MCF 10A (cell line): ENCODE measurements at regions of chr4 and their contacts with region 1.

Region 1: GRCh38 chr4:41214136-41214824 is at the start of gene APBB2:
- DNase-seq: peak; percentile 97
- H3K4me3 Mint-ChIP-seq: peak within 1 kb of the TSS; percentile 98
- H3K27ac Mint-ChIP-seq: peak within 1 kb of the TSS; percentile 97
- H3K4me1 Mint-ChIP-seq: peaks cover 12% of the 10 kb centered on the region
- H3K27me3 Mint-ChIP-seq: no peaks in the 10 kb centered on the region
- CTCF ChIP-seq: peak; percentile 86
- total RNA-seq, gene APBB2: 159 and 201 TPM in 2 replicates

Region 2: GRCh38 chr4:40812386-40812785 is 401.9 kb before region 1 on chr4:
- CTCF ChIA-PET with region 1: no interaction called
- POLR2A ChIA-PET with region 1: no interaction called
- intact Hi-C with region 1: no loop called
- DNase-seq: peak; percentile 5
- H3K4me3 Mint-ChIP-seq: no peak overlapping the region
- H3K27ac Mint-ChIP-seq: no peak overlapping the region
- H3K4me1 Mint-ChIP-seq: no peaks in the 10 kb centered on the region
- H3K27me3 Mint-ChIP-seq: no peaks in the 10 kb centered on the region
- CTCF ChIP-seq: no peak

Region 3: DNA sequence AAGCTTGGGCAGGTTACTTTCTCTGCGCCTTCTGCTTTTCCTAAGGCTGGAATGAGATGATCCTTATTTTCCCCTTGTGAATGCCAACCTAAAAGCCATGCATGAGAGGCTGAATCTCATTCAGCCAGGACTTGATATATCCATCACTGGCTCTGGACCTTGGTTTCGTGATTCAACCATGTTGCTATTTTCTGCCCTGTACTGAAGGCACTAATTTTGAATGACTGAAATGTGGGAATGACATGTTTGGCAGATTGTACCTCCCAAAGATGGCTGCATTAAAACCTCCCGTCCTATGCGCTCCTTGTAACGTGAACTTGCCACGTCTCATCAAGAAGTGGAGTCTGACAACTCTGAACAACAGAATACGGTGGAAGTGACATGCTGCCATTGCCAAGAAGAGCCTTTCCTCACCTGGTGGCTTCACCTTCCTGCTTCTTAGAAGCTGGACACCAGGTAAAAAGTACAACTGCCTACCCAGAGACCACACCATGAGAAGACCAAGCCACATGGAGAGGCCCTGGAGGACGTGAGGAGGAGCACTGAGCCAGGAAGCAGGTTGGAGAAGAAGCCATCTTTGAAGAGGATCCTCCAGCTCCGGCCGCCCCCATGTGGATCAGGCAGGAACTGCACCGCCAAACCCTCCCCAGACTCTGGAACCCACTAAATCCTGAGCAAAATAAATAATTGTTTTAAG is 290.0 kb before region 1 on chr4:
- CTCF ChIA-PET with region 1: interaction called, 25 read pairs
- POLR2A ChIA-PET with region 1: interaction called, 10 read pairs
- intact Hi-C with region 1: loop called (anchors 1 kb)
- DNase-seq: peak; percentile 69
- H3K4me3 Mint-ChIP-seq: no peak overlapping the region
- H3K27ac Mint-ChIP-seq: no peak overlapping the region
- H3K4me1 Mint-ChIP-seq: peaks cover 25% of the 10 kb centered on the region
- H3K27me3 Mint-ChIP-seq: no peaks in the 10 kb centered on the region
- CTCF ChIP-seq: peak; percentile 77

Region 4: GRCh38 chr4:40998675-40999358 is 215.5 kb before region 1 on chr4:
- CTCF ChIA-PET with region 1: interaction called, 11 read pairs
- POLR2A ChIA-PET with region 1: interaction called, 15 read pairs
- intact Hi-C with region 1: no loop called
- DNase-seq: peak; percentile 92
- H3K4me3 Mint-ChIP-seq: peak overlapping the region; percentile 31
- H3K27ac Mint-ChIP-seq: peak overlapping the region; percentile 74
- H3K4me1 Mint-ChIP-seq: peaks cover 26% of the 10 kb centered on the region
- H3K27me3 Mint-ChIP-seq: no peaks in the 10 kb centered on the region
- CTCF ChIP-seq: no peak

Region 5: GRCh38 chr4:41133454-41134018 is 80.7 kb before region 1 on chr4:
- CTCF ChIA-PET with region 1: interaction called, 9 read pairs
- POLR2A ChIA-PET with region 1: interaction called, 58 read pairs
- intact Hi-C with region 1: no loop called
- DNase-seq: no peak
- H3K4me3 Mint-ChIP-seq: no peak overlapping the region
- H3K27ac Mint-ChIP-seq: peak overlapping the region; percentile 82
- H3K4me1 Mint-ChIP-seq: peaks cover 54% of the 10 kb centered on the region
- H3K27me3 Mint-ChIP-seq: no peaks in the 10 kb centered on the region
- CTCF ChIP-seq: no peak

Region 6: DNA sequence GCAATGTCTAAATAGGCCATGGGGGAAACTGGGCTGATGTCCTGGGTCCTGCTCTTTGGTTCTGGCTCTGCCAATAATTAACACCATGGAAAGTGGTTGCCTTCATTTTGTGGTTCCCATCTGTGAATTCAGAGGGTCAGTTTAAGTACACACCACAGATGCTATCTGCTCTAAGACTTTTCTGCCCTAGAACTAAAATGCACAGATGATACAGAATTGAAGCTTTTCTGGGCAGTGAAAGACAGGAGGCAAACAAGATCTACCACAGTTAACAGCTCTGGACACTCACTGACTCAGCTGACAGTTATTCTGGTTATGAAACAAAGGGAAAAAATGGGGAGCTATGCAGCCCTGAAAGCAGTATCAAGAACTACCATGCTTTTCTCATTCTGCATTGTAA is 37.3 kb before region 1 on chr4:
- CTCF ChIA-PET with region 1: interaction called, 20 read pairs
- POLR2A ChIA-PET with region 1: interaction called, 47 read pairs
- intact Hi-C with region 1: loop called (anchors 1 kb)
- DNase-seq: peak; percentile 69
- H3K4me3 Mint-ChIP-seq: no peak overlapping the region
- H3K27ac Mint-ChIP-seq: peak overlapping the region; percentile 95
- H3K4me1 Mint-ChIP-seq: peaks cover 51% of the 10 kb centered on the region
- H3K27me3 Mint-ChIP-seq: no peaks in the 10 kb centered on the region
- CTCF ChIP-seq: peak; percentile 19

Region 7: GRCh38 chr4:41307638-41308037 is 93.4 kb after region 1 on chr4:
- CTCF ChIA-PET with region 1: no interaction called
- POLR2A ChIA-PET with region 1: no interaction called
- intact Hi-C with region 1: no loop called
- DNase-seq: no peak
- H3K4me3 Mint-ChIP-seq: no peak overlapping the region
- H3K27ac Mint-ChIP-seq: no peak overlapping the region
- H3K4me1 Mint-ChIP-seq: peaks cover 5% of the 10 kb centered on the region
- H3K27me3 Mint-ChIP-seq: no peaks in the 10 kb centered on the region
- CTCF ChIP-seq: no peak